ENCODE measurements at regions of chr9 and their contacts with region 1.

Region 1: GRCh38 chr9:91886421-91887075 is 63.5 kb downstream of the ROR2 start:
- DNase-seq: no peak
- H3K4me3 ChIP-seq: peak overlapping the region in 1 of 2 donors; percentile 7
- H3K27ac ChIP-seq: no peak overlapping the region
- H3K4me1 ChIP-seq: no peaks in the 10 kb centered on the region
- H3K27me3 ChIP-seq: no peaks in the 10 kb centered on the region
- CTCF ChIP-seq: no peak
- POLR2A ChIP-seq: no peak

Region 2: DNA sequence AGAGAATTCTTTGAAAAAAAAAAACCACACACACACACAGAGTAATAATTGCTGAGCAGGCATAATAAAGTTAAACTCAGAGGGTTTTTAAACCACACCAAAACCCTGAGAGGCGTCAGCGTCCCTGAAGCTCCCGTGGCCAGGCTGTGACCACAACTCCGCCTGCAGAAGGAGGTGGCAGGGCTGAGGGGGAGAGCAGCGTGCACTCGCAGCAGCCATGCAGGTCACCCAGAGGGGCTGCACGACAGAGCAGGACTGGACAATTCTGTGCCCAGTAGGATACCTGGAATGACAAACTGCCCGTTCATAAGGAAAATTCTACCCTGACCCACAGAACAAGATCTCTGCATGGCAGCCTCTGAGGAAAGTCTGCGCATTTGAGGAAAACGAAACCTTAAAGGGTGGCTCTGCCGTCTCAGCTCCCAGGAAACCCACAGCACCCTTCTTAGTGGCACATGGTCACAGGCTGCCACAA is 19.5 kb after region 1 on chr9:
- intact Hi-C with region 1: loop called (anchors 2 kb)
- DNase-seq: peak; percentile 51
- H3K4me3 ChIP-seq: peak overlapping the region; percentile 24 to 39
- H3K27ac ChIP-seq: peak overlapping the region; percentile 53 to 91
- H3K4me1 ChIP-seq: peaks cover 23% of the 10 kb centered on the region
- H3K27me3 ChIP-seq: no peaks in the 10 kb centered on the region
- CTCF ChIP-seq: no peak
- POLR2A ChIP-seq: no peak

Region 3: DNA sequence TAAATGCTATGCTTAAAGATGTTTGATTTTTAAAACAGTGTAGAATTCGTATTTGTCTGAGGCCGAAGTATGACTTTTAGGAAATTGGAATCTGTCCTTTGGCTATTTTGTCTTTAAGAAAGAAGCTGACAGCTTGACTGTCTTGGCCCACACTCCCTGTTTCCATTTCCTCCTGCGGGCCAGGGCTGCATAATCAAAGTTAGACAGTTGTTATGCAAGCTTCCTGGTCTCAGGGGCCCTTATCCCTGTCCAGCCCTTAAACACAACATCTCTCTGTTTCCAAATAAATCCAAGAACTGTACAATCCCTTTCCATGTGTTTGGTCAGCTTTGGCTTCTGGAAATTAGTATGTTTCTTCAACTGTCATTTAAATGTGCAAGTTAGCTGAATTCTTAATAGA is 703.8 kb after region 1 on chr9:
- intact Hi-C with region 1: no loop called
- DNase-seq: no peak
- H3K4me3 ChIP-seq: no peak overlapping the region
- H3K27ac ChIP-seq: no peak overlapping the region
- H3K4me1 ChIP-seq: no peaks in the 10 kb centered on the region
- H3K27me3 ChIP-seq: no peaks in the 10 kb centered on the region
- CTCF ChIP-seq: no peak
- POLR2A ChIP-seq: no peak